ENCODE measurements at regions of chr9 and their contacts with region 1.

Region 1: DNA sequence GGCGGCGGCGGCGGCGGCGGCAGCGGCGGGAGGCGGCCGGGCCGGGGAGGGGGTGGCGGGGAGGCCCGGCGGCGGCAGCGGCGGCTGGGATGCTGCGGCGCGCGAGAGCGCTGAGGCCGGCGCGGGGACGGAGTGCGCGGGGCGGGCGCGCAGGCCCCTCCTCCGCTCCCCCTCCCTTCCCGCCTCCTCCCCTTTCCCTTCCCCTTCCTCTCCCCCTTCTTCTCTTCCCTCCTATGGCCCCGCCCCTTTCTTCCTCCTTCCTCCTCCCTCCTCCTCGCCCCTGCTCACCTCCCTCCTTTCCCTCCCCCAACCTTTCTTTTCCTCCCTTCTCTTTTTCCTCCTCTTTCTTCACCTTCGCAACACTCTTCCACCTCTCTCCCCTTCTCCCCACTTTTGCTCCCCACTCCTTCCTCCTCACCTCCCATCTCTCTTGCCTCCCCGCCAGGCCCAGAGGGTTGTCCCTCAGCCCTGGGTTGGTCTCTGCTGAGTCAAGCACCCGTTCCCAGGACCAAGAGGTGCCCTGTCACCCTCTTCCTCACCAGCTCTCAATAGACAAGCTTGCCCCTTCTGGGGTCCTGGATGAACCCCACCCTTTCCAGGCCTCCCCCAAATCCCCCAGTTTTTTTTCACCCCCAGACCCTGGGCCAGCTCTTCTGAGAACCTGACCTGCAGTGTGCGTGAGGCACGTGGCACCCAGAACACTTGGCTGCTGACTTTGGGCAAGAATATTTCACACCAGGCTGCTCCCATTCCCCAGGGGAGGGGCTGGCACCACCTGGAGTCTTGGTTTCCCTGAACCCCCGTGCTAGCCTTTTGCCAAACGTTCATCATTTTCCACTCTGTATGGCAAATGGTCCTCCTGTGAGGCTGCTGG is at the start of gene SEMA4D:
- DNase-seq: peak; percentile 86
- H3K4me3 Mint-ChIP-seq: peak within 1 kb of the TSS; percentile 92
- H3K27ac Mint-ChIP-seq: peak within 1 kb of the TSS; percentile 94
- H3K4me1 Mint-ChIP-seq: peaks cover 79% of the 10 kb centered on the region
- H3K27me3 Mint-ChIP-seq: no peaks in the 10 kb centered on the region
- total RNA-seq, gene SEMA4D: 368 and 370 TPM in 2 replicates

Region 2: DNA sequence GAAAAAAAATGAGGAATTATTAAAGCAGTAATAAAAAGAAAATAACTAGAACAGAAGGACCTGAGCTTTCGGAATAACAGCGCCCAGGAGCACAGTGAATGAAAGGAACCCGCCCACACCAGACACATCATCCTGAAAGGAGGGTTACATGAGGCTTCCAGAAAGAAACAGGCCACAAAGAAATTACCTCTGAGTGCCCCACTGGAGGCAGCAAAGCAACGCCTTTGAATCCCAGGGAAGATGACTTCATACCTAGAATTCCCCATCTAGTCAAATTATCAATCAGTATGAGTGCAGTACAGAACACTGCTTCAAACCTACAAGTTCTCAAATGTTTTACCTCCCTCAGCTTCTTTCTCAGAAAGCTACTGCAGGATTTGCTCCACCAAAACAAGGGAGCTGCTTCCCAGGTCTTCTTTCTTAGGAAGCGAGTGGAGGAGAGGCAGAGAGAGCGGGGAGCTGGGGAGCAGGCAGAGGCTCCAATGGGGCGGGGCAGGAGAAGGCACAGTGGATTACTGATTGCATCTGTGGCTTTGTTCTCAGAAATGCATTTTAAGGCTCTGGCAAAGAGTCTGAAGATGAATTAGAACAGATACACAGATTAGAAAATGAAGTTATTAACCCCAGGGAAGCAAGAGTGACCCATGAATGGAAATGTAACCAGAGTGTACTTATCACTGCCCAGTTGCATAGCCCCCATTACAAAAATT is 87.4 kb before region 1 on chr9:
- intact Hi-C with region 1: loop called (anchors 1 kb)
- DNase-seq: peak; percentile 81
- H3K4me3 Mint-ChIP-seq: peak overlapping the region; percentile 76
- H3K27ac Mint-ChIP-seq: peak overlapping the region; percentile 96
- H3K4me1 Mint-ChIP-seq: peaks cover 87% of the 10 kb centered on the region
- H3K27me3 Mint-ChIP-seq: no peaks in the 10 kb centered on the region

Region 3: DNA sequence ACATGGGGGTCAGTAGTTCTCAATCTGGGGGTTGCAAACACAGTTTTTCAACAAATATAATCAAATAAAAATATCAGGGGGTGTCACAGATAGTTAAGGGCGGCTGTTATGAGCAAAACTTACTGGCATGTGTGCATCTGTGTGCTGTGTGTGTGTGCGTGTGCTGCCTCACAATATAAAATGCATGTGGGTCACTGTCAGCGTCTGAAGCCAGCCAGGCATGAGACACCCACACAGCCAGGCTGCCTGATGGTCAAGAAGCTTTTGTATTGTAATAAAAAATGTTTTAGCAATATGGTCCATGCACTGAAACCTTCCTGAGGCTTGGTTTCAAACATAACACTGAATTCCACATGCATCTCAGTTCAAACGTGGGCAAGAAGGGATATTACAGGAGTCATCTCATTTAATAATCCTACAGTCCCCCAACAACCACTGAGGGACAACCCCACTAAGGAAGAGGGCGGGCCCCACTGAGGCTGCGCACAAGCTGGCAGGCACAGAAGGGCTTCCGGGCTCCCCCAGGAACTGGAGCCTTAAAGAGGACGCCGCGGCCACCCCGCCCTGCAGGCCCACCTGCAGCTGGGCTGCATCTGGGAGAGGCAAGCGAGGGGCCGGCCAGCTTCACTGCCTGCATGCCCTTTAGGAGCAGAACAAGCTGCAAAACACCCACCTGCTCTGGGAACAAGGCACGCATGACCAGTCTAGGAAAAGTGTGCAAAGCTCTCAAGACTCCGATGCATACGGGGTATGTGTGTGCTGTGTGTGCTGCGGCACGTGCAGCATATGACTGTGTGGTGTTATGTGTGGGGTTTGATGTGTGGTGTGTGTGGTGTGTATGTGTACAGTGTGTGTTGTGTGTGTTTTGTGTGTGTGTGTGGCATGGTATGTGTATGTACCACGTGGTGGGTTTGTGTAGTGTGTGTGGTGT is 14.4 kb before region 1 on chr9:
- intact Hi-C with region 1: loop called (anchors 2 kb)
- DNase-seq: peak; percentile 90
- H3K4me3 Mint-ChIP-seq: peak overlapping the region; percentile 82
- H3K27ac Mint-ChIP-seq: peak overlapping the region; percentile 98
- H3K4me1 Mint-ChIP-seq: peaks cover 81% of the 10 kb centered on the region
- H3K27me3 Mint-ChIP-seq: no peaks in the 10 kb centered on the region

Region 4: DNA sequence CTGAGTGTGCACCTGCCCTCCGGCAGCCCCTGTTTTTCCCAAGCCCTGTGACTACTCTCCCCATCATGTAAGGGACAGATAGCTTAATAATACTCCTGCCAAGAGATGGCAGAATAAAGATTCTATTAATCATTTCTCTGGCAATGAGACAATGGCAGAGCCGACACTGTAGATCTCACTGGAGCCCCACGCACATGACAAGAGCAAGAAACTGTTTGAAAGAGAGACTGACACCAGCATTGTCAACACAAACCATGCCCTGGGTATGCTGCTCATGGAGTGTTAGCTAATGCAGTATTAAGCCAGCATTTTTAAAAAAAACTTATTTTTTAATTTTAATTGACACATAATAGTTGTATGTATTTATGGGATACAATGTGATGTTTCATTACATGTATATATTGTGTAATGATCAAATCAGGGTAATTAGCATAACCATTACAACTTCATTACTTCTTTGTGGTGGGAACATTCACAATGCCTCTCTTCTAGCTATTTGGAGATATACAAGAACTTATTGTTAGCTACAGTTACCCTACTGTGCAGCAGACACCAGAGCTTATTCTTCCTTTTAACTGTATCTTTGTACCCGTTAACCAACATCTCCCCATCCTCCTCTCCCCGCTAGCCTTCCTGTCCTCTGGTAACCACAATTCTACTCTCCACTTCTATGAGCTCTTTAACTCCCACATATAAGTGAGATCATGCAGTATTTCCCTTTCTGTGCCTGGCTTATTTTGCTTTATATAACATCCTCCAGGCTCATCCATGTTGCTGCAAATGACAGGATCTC is 31.2 kb after region 1 on chr9:
- intact Hi-C with region 1: loop called (anchors 1 kb)
- DNase-seq: peak; percentile 76
- H3K4me3 Mint-ChIP-seq: peak overlapping the region; percentile 38
- H3K27ac Mint-ChIP-seq: peak overlapping the region; percentile 57
- H3K4me1 Mint-ChIP-seq: peaks cover 82% of the 10 kb centered on the region
- H3K27me3 Mint-ChIP-seq: no peaks in the 10 kb centered on the region

Region 5: DNA sequence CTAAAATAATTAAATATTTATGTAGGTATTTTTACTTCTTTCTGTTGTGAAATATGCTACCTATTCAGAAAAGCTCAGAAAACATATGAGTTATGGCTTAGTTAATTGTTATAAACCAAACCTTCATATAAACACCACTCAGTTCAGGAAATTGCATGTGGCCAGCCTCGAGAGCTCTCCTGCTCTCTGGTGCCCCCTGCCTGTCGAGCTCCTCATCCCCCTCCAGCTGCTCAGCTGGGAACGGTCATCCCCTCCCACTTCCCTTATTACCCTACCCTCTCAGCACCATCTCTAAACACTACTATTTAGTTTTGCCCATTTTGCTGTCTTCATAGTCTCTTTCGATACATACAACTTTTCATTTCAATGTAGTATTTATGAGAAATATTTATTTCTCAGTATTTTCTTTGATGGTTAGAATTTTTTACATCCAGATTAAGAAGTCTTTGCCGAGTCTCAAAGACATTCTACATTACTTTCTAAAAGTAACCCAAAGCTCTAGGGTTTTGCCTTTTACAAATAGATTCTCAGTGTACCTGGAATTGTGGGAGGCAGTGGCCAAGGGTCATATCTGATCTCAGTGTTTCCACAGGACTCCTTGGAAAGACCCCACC is 50.9 kb after region 1 on chr9:
- intact Hi-C with region 1: loop called (anchors 2 kb)
- DNase-seq: peak; percentile 95
- H3K4me3 Mint-ChIP-seq: peak overlapping the region; percentile 28
- H3K27ac Mint-ChIP-seq: peak overlapping the region; percentile 62
- H3K4me1 Mint-ChIP-seq: peaks cover 19% of the 10 kb centered on the region
- H3K27me3 Mint-ChIP-seq: peaks cover 11% of the 10 kb centered on the region

Measured in activated CD4-positive, alpha-beta T cell treated with anti-CD3 and anti-CD28 coated beads, Interleukin-2, amount 10 ng/mL, durations not matched to agents 24 days and 14 days (primary cell).